Head of caudate nucleus (tissue), 42 donors: ENCODE measurements at regions of chr4 and their contacts with region 1.

Region 1: DNA sequence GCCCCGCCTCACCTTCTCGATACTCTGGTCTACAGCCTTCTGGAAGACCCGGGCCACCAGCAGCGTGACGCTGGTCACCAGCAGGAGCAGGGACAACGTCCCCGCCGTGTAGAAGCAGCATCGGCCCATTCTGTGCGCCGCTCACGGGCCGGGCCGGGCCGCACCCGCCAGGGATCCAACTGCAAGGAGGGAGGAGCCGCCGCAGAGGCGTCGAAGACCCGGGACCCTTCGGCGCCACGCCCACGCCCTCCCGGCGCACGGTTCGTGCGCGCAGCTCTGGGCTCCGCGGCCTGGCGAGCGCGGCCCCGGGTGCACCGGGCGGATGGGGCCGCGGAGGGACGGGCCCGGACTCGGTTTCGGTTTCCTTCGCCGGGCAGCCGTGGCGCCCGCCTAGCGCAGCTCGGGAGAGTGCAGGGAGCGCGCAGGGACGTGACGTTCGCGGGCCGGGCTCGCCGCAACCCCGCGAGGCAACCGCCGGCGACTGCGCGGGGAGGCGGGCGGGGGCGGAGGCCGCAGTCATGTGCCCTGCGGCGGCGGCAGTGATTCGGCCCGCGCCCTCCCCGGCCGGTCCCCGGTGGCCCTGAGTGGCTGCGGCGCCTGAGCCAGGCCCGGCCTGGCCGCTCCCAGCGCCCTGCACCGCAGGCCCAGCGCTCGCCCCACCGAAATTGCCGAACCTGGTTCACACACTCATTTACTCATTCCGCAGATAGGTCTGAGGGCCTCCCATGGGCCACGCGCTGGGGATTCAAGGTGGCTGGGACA is at the start of gene SCARB2:
- DNase-seq: peak; percentile 56 to 94 (median 87)

Region 2: DNA sequence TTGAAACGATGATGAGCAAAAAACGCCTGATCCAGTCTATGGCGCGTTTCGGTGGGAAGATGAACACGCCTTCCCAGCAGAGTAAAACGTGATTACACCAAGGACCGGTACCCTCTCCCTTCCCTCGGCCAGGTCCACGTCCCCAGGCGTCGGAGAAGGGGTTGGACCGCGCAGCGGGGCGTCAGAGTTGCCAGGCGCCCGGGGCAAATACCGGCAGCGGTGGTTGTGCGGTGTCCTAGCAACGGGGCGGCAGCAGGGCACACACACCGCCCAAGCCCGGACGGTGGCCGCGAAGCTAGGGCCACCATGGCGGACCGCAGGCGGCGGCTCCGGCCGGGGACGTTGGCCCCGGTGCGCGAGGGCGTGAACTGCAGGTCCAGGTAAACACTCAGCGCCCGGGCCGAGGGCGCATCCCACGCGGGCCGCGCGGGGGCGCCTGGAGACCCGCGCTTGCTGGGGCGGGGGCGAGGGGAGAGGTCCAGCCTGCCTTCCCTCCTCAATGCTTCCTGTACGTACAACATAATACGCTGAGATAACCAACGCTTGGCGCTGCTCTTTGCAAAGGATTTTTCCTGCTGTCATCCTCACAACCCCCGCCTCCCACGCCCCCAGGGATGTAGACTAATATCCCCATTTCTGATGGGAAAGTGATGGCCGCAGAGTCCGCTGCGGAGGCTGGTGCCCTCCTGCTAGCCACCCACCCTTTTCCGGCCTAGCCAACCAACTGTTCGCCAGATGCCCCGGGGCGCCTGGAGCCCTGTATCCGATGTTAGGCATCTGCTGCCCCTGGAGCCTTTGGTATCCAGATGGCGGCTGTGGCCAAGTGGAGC is 38.1 kb after region 1 on chr4 and contains the start of gene FAM47E:
- intact Hi-C with region 1: loop called (anchors 2 kb)
- DNase-seq: peak; percentile 33 to 86 (median 72)

Region 3: GRCh38 chr4:76718831-76719230 is 505.2 kb after region 1 on chr4:
- intact Hi-C with region 1: no loop called
- DNase-seq: no peak

Region 4: GRCh38 chr4:77075869-77076799 is 862.5 kb after region 1 on chr4 and contains the start of gene CCNI:
- intact Hi-C with region 1: loop called (anchors 5 kb)
- DNase-seq: peak; percentile 85 to 97 (median 94)